ENCODE measurements at regions of chr1 and their contacts with region 1.

Region 1: GRCh38 chr1:201970334-201971159 is 11.9 kb upstream of the RNPEP start:
- DNase-seq: no peak
- ATAC-seq: no peak
- H3K4me3 ChIP-seq: no peak overlapping the region
- H3K27ac ChIP-seq: no peak overlapping the region
- H3K4me1 ChIP-seq: peaks cover 7% of the 10 kb centered on the region in 2 donors
- H3K27me3 ChIP-seq: no peaks in the 10 kb centered on the region
- CTCF ChIP-seq: no peak
- POLR2A ChIP-seq: no peak

Region 2: DNA sequence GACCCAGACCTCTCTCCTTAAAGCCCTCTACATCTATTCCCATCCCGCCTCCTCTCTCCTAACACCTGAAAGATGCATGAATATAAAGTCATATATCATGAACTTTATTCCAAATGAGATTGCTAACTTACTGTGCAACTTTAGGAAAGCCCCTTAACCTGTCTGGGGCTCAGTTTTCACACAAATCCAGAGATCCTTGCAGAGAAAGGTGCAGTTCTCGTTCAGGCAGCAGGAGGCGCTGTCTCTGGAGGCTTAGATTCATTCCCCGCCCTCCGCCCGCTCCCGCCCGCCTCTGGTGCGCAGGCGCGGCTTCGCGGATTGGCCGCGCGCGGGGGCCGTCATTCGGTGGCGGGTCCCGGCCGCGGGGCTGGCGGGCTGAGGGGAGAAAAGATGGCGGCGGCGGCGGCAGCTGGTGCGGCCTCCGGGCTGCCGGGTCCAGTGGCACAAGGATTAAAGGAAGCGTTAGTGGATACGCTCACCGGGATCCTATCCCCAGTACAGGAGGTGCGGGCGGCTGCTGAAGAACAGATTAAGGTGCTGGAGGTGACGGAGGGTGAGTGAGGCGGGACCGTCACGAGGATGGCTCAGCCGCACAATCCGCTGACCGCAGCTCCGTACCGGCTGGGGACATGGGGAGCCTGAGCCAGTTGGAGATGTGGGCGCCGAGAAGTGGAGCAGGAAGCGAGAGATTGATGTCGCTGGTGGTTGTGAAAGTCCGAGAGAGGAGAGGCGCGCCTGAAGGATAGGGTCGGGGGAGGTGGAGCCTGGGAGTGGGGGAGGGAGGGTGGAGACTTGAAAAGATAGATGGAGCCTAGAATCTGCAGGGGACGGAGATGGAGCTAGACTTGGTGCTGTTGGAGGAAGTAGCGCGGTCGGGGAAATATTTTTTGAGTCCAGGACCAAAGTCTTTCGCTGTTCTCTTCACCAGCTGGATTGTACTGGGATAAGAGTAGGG is 141.4 kb before region 1 on chr1 and contains the start of gene IPO9:
- in situ Hi-C with region 1: no loop called
- intact Hi-C with region 1: loop called (anchors 5 kb)
- DNase-seq: peak; percentile 82 to 92
- ATAC-seq: peak; percentile 92 to 94
- H3K4me3 ChIP-seq: peak within 1 kb of the TSS; percentile 66 to 100 (median 97)
- H3K27ac ChIP-seq: peak within 1 kb of the TSS; percentile 85 to 99 (median 96)
- H3K4me1 ChIP-seq: peaks cover 32 to 55% of the 10 kb centered on the region in 2 donors
- H3K27me3 ChIP-seq: no peaks in the 10 kb centered on the region
- CTCF ChIP-seq: peak; percentile 93 to 98 (median 97)
- POLR2A ChIP-seq: peak; percentile 78
- total RNA-seq, gene IPO9: 7.2 to 16.3 (median 10.3) TPM

Region 3: GRCh38 chr1:201877877-201878401 is 92.6 kb before region 1 on chr1:
- in situ Hi-C with region 1: no loop called
- intact Hi-C with region 1: loop called (anchors 1 kb)
- DNase-seq: peak in 1 of 2 donors; percentile 70
- ATAC-seq: peak; percentile 58 to 74
- H3K4me3 ChIP-seq: no peak overlapping the region
- H3K27ac ChIP-seq: peak overlapping the region; percentile 78 to 90 (median 84)
- H3K4me1 ChIP-seq: peaks cover 38 to 52% of the 10 kb centered on the region in 2 donors
- H3K27me3 ChIP-seq: no peaks in the 10 kb centered on the region
- CTCF ChIP-seq: peak; percentile 48 to 79 (median 65)
- POLR2A ChIP-seq: no peak

Region 4: DNA sequence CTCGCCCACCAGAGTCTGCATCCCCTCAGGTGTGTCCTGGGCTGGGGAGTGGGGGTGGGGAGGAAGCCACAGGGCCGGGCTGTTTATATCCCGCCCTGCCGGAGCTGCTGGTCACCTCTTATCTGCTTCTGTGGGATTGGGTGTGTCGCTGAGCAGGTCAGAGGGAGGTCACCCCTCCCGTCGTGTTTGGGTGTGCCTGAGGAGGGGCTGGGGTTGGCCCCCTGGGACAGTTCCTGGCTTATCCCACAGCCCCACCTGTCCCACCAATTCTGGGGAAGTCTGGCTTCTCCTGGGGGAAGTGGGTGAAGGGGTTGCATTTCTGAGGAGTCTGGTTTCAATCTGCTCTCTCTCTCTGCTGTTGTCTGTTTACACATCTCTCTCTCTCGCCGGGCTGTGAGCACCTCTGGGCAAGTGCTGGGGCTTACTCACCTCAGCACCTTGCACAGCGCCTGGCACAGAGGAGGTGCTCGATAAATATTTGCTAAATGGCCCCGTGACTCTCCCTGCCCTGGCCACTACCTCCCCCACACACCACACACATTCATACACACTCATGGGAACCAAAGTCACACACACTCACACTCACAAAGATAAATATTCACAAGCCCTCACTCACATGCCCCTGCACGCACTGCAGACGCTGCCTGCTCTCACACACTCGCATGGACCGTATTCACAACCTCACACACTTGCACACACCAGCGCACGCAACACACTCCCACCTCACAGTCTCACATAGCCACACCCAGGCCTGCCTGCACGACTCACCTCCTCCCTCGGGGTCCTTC is 48.1 kb after region 1 on chr1:
- in situ Hi-C with region 1: no loop called
- intact Hi-C with region 1: no loop called
- DNase-seq: no peak
- ATAC-seq: no peak
- H3K4me3 ChIP-seq: no peak overlapping the region
- H3K27ac ChIP-seq: no peak overlapping the region
- H3K4me1 ChIP-seq: no peaks in the 10 kb centered on the region
- H3K27me3 ChIP-seq: no peaks in the 10 kb centered on the region
- CTCF ChIP-seq: no peak
- POLR2A ChIP-seq: no peak